ENCODE measurements at regions of chr10 and their contacts with region 1.

Region 1: GRCh38 chr10:102167861-102168260 is 15.7 kb downstream of the NOLC1 start:
- DNase-seq: no peak
- ATAC-seq: no peak
- H3K4me3 Mint-ChIP-seq: no peak overlapping the region
- H3K27ac Mint-ChIP-seq: no peak overlapping the region
- H3K4me1 Mint-ChIP-seq: peaks cover 12% of the 10 kb centered on the region
- H3K27me3 Mint-ChIP-seq: no peaks in the 10 kb centered on the region

Region 2: DNA sequence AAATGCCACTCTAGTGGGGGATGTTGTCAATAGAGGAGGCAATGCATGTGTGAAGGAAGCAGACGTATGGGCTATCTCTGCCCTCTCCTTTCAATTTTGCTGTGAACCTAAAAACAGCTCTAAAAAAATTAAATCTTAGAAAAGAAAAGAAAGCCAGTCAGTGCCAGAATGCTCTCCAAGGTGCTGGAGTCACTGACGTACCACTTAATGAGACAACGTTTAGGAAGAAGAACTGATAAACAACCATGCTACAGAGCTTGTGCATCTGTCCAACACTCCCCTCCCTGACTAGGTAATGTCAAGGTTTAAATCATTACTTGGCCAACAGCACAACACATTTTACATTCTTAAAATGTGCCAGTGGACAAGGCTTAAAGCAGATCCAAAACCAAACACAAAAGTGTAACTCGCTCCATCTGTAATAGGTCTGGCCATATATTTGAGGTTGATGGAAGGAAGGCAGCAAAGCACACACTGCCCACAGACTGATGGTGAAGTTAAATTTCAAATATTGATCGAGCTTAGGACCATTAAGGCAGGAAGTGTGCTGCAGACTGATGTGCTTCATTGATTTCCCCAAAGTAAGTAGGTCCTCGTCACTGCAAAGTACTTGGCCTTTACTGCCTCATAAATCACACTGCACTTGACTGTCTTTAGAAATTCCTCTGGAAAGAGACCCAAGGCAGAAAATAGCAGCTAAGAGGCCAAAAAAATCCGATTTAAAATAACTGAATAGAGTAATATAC is 127.4 kb before region 1 on chr10:
- CTCF ChIA-PET with region 1: no interaction called
- POLR2A ChIA-PET with region 1: no interaction called
- DNase-seq: no peak
- ATAC-seq: no peak
- H3K4me3 Mint-ChIP-seq: no peak overlapping the region
- H3K27ac Mint-ChIP-seq: no peak overlapping the region
- H3K4me1 Mint-ChIP-seq: peaks cover 3% of the 10 kb centered on the region
- H3K27me3 Mint-ChIP-seq: no peaks in the 10 kb centered on the region

Region 3: DNA sequence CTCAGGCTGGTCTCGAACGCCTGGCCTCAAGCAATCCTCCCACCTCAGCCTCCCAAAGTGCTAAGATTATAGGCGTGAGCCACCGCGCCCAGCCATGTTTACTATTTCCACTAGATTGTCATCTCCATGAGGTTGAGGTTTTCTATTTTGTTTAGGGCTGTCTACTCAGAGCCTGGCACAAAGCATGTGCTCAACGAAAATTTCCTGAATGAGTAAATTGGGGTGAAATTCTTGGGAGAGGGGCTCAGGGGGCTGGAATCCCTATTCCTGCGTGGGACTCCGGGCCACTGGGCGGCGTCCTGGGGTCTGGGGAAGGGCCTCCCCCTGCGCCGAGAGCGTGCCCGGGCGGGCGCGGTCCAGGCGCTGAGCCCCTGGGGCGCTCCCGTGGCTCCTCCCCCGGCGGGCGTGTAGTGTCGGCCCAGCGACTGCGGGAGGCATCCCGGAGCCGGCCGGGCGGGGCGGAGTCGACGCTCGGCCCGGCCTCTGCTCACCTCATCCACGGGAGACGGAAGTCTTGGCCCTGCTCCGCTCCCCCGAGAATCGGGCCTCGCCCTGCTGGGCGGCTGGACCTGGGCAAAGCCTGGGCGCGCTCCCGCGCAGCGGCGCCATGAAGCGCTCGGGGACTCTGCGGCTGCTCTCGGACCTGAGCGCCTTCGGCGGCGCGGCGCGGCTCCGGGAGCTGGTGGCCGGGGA is 102.8 kb before region 1 on chr10 and contains the start of gene HPS6:
- CTCF ChIA-PET with region 1: no interaction called
- POLR2A ChIA-PET with region 1: no interaction called
- DNase-seq: peak; percentile 91
- ATAC-seq: peak; percentile 99
- H3K4me3 Mint-ChIP-seq: peak within 1 kb of the TSS; percentile 85
- H3K27ac Mint-ChIP-seq: peak within 1 kb of the TSS; percentile 88
- H3K4me1 Mint-ChIP-seq: peaks cover 26% of the 10 kb centered on the region
- H3K27me3 Mint-ChIP-seq: no peaks in the 10 kb centered on the region
- total RNA-seq, gene HPS6: 23.2 to 25.3 TPM

Region 4: DNA sequence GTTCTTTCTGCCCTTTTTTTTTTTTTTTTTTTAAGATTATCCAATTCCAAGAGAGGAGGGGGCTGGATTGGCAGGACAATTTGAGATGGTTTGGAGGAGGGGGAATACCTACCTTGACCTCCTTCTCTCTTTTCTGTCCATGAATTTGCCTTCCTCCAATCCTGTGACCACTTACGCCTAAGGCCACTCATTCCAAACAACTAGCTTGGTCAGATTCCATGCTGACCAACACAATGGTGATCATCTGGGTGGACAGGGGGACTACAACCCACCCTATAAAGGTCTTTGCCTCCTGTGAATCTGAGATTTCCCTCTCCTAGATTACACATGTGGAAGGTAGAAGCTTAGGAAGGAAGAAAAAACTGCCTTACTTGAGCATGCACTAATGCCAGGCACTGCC is 45.4 kb before region 1 on chr10:
- CTCF ChIA-PET with region 1: no interaction called
- POLR2A ChIA-PET with region 1: no interaction called
- DNase-seq: no peak
- ATAC-seq: no peak
- H3K4me3 Mint-ChIP-seq: no peak overlapping the region
- H3K27ac Mint-ChIP-seq: no peak overlapping the region
- H3K4me1 Mint-ChIP-seq: peaks cover 34% of the 10 kb centered on the region
- H3K27me3 Mint-ChIP-seq: no peaks in the 10 kb centered on the region

Region 5: GRCh38 chr10:102151774-102152544 is 15.9 kb before region 1 on chr10 and contains the start of gene NOLC1:
- CTCF ChIA-PET with region 1: interaction called, 43 read pairs
- POLR2A ChIA-PET with region 1: no interaction called
- DNase-seq: peak; percentile 100
- ATAC-seq: peak; percentile 95
- H3K4me3 Mint-ChIP-seq: peak within 1 kb of the TSS; percentile 98
- H3K27ac Mint-ChIP-seq: peak within 1 kb of the TSS; percentile 98
- H3K4me1 Mint-ChIP-seq: peaks cover 46% of the 10 kb centered on the region
- H3K27me3 Mint-ChIP-seq: no peaks in the 10 kb centered on the region
- total RNA-seq, gene NOLC1: 94.1 to 95.3 TPM

Region 6: DNA sequence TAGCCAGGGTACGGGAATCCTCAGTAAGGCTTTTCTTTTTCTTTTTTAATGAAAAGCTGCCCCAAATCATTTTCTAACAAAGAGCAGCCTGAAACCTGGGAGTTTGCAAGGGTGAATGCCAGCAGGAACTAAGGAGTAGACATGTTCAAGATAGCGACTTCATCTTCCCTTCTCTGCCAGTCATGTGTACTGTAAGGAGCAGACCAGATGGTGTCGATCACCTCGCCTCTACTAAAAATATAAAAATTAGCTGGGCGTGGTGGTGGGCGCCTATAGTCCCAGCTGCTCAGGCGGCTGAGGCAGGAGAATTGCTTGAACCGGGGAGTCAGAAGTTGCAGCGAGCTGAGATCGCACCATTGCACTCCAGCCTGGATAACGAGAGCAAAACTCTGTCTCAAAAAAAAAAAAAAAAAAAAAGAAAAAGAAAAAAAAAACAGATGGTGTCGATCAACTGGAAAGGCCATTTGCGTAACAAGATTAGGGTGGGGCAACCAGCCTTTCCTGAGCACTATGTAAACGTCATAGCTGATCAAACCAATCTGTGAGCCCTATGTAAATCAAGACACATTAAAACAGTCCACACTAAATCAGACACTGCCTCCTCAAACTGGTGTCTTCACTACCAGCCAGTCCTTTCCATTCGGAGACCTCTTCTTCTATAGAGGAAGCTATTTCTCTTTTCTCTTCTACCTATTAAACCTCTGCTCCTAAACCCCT is 18.1 kb after region 1 on chr10:
- CTCF ChIA-PET with region 1: interaction called, 27 read pairs
- POLR2A ChIA-PET with region 1: no interaction called
- DNase-seq: no peak
- ATAC-seq: no peak
- H3K4me3 Mint-ChIP-seq: no peak overlapping the region
- H3K27ac Mint-ChIP-seq: no peak overlapping the region
- H3K4me1 Mint-ChIP-seq: peaks cover 14% of the 10 kb centered on the region
- H3K27me3 Mint-ChIP-seq: peaks cover 3% of the 10 kb centered on the region

Region 7: GRCh38 chr10:102220612-102221011 is 52.8 kb after region 1 on chr10:
- CTCF ChIA-PET with region 1: interaction called, 34 read pairs
- POLR2A ChIA-PET with region 1: interaction called, 3 read pairs
- DNase-seq: no peak
- ATAC-seq: no peak
- H3K4me3 Mint-ChIP-seq: no peak overlapping the region
- H3K27ac Mint-ChIP-seq: no peak overlapping the region
- H3K4me1 Mint-ChIP-seq: peaks cover 2% of the 10 kb centered on the region
- H3K27me3 Mint-ChIP-seq: peaks cover 27% of the 10 kb centered on the region

Region 8: GRCh38 chr10:102245101-102245931 is 77.5 kb after region 1 on chr10 and contains the start of gene GBF1:
- CTCF ChIA-PET with region 1: interaction called, 15 read pairs
- POLR2A ChIA-PET with region 1: interaction called, 4 read pairs
- DNase-seq: peak; percentile 95
- ATAC-seq: peak; percentile 90
- H3K4me3 Mint-ChIP-seq: peak within 1 kb of the TSS; percentile 99
- H3K27ac Mint-ChIP-seq: peak within 1 kb of the TSS; percentile 89
- H3K4me1 Mint-ChIP-seq: peaks cover 48% of the 10 kb centered on the region
- H3K27me3 Mint-ChIP-seq: peaks cover 14% of the 10 kb centered on the region
- total RNA-seq, gene GBF1: 39.8 to 42.9 TPM

Region 9: DNA sequence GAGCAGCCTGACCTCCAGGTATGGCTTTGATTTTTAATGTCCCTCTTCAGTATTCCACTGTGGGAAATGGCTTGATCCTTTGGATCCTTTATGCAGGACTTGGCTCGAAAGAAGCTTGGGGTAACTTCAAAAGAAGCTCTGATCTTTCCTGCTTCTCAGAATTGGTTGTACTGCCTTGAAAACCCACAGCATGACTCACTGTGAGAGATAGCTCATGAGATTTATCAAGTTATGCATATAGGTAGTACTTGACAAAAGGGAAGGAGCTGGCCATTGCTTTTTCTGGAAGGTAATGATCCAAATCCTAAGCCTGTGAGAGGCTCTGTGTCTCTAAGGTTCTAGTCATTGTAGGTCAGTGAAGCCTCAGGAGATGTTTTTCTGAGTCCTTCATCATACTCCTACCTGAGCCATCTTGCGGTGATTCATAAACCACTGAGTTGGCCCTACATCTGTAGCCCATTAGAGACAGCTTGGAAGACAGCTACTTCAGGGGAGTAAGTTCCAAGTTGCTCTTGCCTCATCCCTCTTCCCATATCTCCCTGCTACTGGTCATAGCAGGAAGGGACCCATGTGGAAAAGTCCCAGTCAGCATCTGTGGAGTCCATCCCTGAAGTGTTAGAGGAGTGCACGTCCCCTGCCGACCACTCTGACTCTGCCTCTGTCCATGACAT is 191.0 kb after region 1 on chr10:
- CTCF ChIA-PET with region 1: interaction called, 101 read pairs
- POLR2A ChIA-PET with region 1: no interaction called
- DNase-seq: no peak
- ATAC-seq: peak; percentile 27
- H3K4me3 Mint-ChIP-seq: no peak overlapping the region
- H3K27ac Mint-ChIP-seq: no peak overlapping the region
- H3K4me1 Mint-ChIP-seq: peaks cover 13% of the 10 kb centered on the region
- H3K27me3 Mint-ChIP-seq: no peaks in the 10 kb centered on the region

Measured in activated CD8-positive, alpha-beta T cell treated with anti-CD3 and anti-CD28 coated beads, Interleukin-2, amount 10 ng/mL, durations not matched to agents 7 days and 5 days (primary cell).